K562 (cell line): ENCODE measurements at regions of chr10 and their contacts with region 1.

Region 1: GRCh38 chr10:30534465-30535144 is 94.9 kb downstream of the LYZL2 start:
- DNase-seq: peak; percentile 68 to 83 (median 70)
- ATAC-seq: peak; percentile 89
- H3K4me3 ChIP-seq: no peak overlapping the region
- H3K27ac ChIP-seq: no peak overlapping the region
- H3K4me1 ChIP-seq: peaks cover 4 to 8% of the 10 kb centered on the region in 2 experiments; a peak in 3 of 5 replicates
- H3K27me3 ChIP-seq: no peaks in the 10 kb centered on the region
- CTCF ChIP-seq: peak; percentile 84 to 95 (median 89)
- EP300 ChIP-seq: no peak
- POLR2A ChIP-seq: no peak
- RAD21 ChIP-seq: peak; percentile 84 to 93

Region 2: GRCh38 chr10:29430101-29430500 is 1104.5 kb before region 1 on chr10:
- CTCF ChIA-PET with region 1: no interaction called
- POLR2A ChIA-PET with region 1: no interaction called
- in situ Hi-C with region 1: no loop called
- intact Hi-C with region 1: no loop called
- DNase-seq: no peak
- ATAC-seq: no peak
- H3K4me3 ChIP-seq: no peak overlapping the region
- H3K27ac ChIP-seq: no peak overlapping the region
- H3K4me1 ChIP-seq: no peaks in the 10 kb centered on the region
- H3K27me3 ChIP-seq: no peaks in the 10 kb centered on the region
- CTCF ChIP-seq: no peak
- EP300 ChIP-seq: no peak
- POLR2A ChIP-seq: no peak
- RAD21 ChIP-seq: no peak

Region 3: DNA sequence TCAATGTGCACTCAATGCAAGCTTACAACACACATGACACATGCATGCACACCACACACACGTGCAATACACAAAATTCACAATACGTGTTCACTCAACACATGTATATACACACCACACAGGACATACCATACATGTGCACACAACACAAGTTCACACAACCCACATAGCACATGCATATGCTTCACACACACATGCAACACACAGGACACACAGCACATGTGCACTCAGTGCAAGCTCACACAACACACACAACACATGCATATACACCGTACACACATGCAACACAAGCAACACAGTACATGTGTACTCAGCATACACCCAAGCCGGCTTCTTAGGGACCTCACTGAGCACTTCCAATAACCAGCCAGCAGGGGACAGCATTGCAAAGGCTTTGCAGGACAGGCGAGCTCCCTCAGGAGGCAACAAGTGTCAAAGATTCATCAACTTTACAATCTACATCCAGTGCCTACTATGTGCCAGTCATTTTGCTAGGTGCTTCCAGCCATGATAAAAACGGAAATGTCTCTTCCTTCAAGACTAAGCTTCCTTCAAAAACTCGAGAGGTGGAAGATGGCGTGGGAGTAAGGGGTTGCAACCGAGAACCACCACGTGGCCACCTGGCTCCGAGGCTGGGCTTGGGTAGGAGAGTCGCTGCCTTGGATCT is 536.3 kb before region 1 on chr10:
- CTCF ChIA-PET with region 1: no interaction called
- POLR2A ChIA-PET with region 1: no interaction called
- in situ Hi-C with region 1: no loop called
- intact Hi-C with region 1: loop called (anchors 2 kb)
- DNase-seq: peak; percentile 69 to 83 (median 76)
- ATAC-seq: peak; percentile 93
- H3K4me3 ChIP-seq: no peak overlapping the region
- H3K27ac ChIP-seq: no peak overlapping the region
- H3K4me1 ChIP-seq: no peaks in the 10 kb centered on the region
- H3K27me3 ChIP-seq: peaks cover 0 to 16% of the 10 kb centered on the region in 2 experiments; a peak in 4 of 5 replicates
- CTCF ChIP-seq: peak; percentile 97 to 99 (median 99)
- EP300 ChIP-seq: no peak
- POLR2A ChIP-seq: no peak
- RAD21 ChIP-seq: peak; percentile 95 to 97

Region 4: DNA sequence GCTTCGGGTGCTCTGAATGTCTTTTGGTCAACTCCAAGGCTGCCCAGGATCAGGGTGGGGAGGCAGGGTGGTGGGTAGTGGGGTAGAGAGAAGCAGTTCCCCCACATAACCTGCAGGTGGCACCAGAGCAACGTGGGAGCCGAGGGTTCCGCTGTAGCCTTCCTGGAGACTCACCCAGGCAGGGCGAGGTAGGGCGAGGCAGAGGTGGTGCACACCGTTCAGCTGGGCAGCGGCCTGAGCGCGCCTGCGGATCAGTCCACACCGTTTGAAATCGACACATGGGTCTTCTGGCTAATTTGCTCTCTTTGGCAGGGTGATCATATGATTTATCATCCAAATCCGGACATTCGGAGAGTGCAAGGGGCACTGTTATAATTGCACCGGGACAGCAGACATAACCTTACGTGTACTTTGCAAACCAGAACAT is 142.0 kb before region 1 on chr10:
- CTCF ChIA-PET with region 1: interaction called, 15 read pairs
- POLR2A ChIA-PET with region 1: no interaction called
- in situ Hi-C with region 1: loop called (anchors 10 kb)
- intact Hi-C with region 1: loop called (anchors 1 kb)
- DNase-seq: peak; percentile 82 to 88 (median 88)
- ATAC-seq: peak; percentile 99
- H3K4me3 ChIP-seq: no peak overlapping the region
- H3K27ac ChIP-seq: no peak overlapping the region
- H3K4me1 ChIP-seq: peaks cover 12 to 16% of the 10 kb centered on the region in 2 experiments
- H3K27me3 ChIP-seq: no peaks in the 10 kb centered on the region
- CTCF ChIP-seq: peak; percentile 78 to 90 (median 88)
- EP300 ChIP-seq: no peak
- POLR2A ChIP-seq: no peak
- RAD21 ChIP-seq: peak; percentile 91 to 95

Region 5: DNA sequence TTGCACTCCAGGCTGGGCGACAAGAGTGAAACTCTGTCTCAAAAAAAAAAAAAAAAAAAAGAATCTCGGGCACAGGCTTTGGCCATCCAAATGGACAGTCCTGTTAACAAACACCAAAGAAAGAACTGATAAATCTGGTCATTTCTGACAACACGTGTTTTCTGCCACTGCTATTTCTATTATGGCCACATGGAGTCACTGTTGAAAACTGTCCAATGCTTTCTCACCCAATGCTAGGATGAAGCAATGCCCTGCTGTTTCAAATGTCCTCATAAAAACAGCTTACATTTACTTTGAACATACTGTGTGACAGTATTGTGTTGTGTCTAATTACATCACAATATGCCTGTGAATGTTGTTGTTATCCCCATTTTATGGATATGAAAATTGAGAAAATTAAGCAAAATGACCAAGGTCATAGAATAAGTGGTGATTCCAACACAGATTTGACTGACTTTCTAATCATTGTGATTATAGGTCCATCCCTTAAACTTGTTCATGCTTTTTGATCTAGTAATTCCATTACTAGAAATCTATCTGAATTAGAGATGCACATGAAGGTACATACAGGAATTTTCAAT is 120.5 kb before region 1 on chr10:
- CTCF ChIA-PET with region 1: interaction called, 17 read pairs
- POLR2A ChIA-PET with region 1: no interaction called
- in situ Hi-C with region 1: no loop called
- intact Hi-C with region 1: loop called (anchors 1 kb)
- DNase-seq: peak; percentile 62 to 73 (median 68)
- ATAC-seq: peak; percentile 74
- H3K4me3 ChIP-seq: no peak overlapping the region
- H3K27ac ChIP-seq: no peak overlapping the region
- H3K4me1 ChIP-seq: peaks cover 5 to 14% of the 10 kb centered on the region in 2 experiments; a peak in 4 of 5 replicates
- H3K27me3 ChIP-seq: no peaks in the 10 kb centered on the region
- CTCF ChIP-seq: peak; percentile 77 to 86 (median 82)
- EP300 ChIP-seq: no peak
- POLR2A ChIP-seq: no peak
- RAD21 ChIP-seq: peak; percentile 92 to 95

Region 6: DNA sequence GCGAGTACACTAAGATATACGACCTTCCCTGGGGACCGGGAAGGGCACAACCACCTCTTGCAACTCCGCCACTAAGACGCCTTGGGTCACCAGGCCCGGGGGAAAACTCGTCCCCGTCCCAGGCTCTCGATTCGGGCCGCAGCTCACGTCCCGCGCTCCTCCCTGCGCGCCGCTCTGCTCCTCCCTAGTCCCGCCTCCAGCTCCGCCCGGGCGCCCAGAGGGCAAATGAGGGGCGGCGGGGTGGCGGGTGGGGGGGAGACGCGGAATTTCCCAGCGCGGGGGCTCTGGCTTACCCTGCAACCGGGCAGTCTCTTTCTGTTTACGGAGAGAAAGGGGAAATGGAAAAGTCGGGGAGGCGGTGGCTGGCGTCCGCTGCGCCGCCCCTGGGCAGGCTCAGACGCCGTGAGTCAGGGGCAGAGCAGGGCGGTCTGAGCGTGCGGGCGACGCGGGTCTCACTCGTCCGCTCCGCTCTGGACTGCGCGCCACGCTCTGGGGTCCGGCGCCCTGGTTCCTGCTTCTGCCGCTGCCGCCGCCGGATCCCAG is 100.8 kb before region 1 on chr10 and contains the start of gene MAP3K8:
- CTCF ChIA-PET with region 1: no interaction called
- POLR2A ChIA-PET with region 1: interaction called, 3 read pairs
- in situ Hi-C with region 1: no loop called
- intact Hi-C with region 1: loop called (anchors 1 kb)
- DNase-seq: peak; percentile 68 to 87 (median 75)
- ATAC-seq: peak; percentile 76
- H3K4me3 ChIP-seq: peak within 1 kb of the TSS; percentile 75
- H3K27ac ChIP-seq: peak within 1 kb of the TSS; percentile 95
- H3K4me1 ChIP-seq: peaks cover 37 to 41% of the 10 kb centered on the region in 2 experiments
- H3K27me3 ChIP-seq: no peaks in the 10 kb centered on the region
- CTCF ChIP-seq: no peak
- EP300 ChIP-seq: no peak
- POLR2A ChIP-seq: no peak; the same call in none of the 2 replicates
- RAD21 ChIP-seq: no peak
- polyA plus RNA-seq, gene MAP3K8: 14.0 to 16.4 TPM

Region 7: GRCh38 chr10:30553625-30554439 is 19.2 kb after region 1 on chr10:
- CTCF ChIA-PET with region 1: no interaction called
- POLR2A ChIA-PET with region 1: interaction called, 14 read pairs
- in situ Hi-C with region 1: no loop called
- intact Hi-C with region 1: no loop called
- DNase-seq: peak; percentile 69 to 82 (median 70)
- ATAC-seq: peak; percentile 68
- H3K4me3 ChIP-seq: peak overlapping the region; percentile 10; the same call in 1 of the 2 replicates
- H3K27ac ChIP-seq: peak overlapping the region; percentile 97
- H3K4me1 ChIP-seq: peaks cover 20 to 37% of the 10 kb centered on the region in 2 experiments
- H3K27me3 ChIP-seq: no peaks in the 10 kb centered on the region
- CTCF ChIP-seq: no peak
- EP300 ChIP-seq: 0 out of 2 replicates have a peak, but pooled peaks have one; percentile 35
- POLR2A ChIP-seq: peak; percentile 36
- RAD21 ChIP-seq: no peak

Region 8: DNA sequence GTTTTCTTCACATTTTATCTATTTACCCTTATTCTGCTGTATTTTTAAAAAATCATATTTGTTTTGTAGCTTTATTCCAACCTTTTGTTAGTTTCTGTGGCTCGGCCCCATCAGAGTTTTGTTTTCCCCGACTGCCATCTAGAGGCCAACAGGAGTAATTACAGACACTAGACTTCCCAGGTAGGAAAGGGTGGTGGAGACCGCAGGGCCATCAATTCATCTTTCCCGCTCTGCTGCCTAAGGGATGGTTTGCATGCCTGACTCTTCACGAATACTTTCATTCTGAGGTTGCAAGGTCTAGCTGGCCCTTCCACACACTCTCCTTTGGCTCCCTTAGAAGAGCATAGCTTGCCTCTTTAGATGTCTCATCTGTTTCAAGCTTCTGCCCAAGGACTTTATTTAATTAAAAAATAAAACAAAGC is 56.7 kb after region 1 on chr10:
- CTCF ChIA-PET with region 1: interaction called, 3 read pairs
- POLR2A ChIA-PET with region 1: no interaction called
- in situ Hi-C with region 1: no loop called
- intact Hi-C with region 1: loop called (anchors 1 kb)
- DNase-seq: peak; percentile 59 to 77 (median 66)
- ATAC-seq: peak; percentile 83
- H3K4me3 ChIP-seq: no peak overlapping the region
- H3K27ac ChIP-seq: no peak overlapping the region
- H3K4me1 ChIP-seq: peaks cover 10% of the 10 kb centered on the region in 2 experiments; a peak in 3 of 5 replicates
- H3K27me3 ChIP-seq: 0 out of 5 replicates have a peak, but pooled peaks cover 0 to 4% of the 10 kb centered on the region in 2 experiments
- CTCF ChIP-seq: peak; percentile 69 to 85 (median 77)
- EP300 ChIP-seq: no peak
- POLR2A ChIP-seq: no peak
- RAD21 ChIP-seq: peak; percentile 88 to 89

Region 9: DNA sequence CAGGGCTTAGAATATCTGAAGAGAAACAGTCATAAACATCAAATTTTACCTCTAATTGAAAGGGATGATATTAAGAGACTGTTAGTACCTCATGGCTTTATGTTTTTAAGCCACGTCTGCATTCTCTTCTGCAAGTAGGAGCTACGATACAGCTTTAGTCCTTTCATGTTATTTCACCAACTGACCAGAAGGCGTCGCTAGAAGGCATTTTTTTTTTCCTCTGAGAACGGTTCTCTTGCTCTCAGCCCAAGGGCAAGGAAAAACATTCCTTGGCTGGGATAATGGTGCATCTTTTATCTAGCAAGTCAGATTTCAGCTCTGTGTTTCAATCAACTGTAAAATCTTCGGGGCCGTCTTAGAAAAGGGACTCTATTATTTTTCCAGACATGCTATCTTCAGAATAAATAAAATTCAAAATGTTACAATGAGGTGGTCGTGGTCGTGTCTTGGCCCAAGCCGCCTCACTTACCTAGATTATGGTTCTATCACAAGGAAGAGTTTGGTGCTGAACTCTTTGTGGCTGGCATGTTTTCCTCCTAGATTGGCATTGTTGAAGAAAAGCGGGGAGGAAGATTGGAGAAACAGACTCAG is 136.5 kb after region 1 on chr10:
- CTCF ChIA-PET with region 1: no interaction called
- POLR2A ChIA-PET with region 1: no interaction called
- in situ Hi-C with region 1: no loop called
- intact Hi-C with region 1: no loop called
- DNase-seq: peak; percentile 20 to 79 (median 46)
- ATAC-seq: peak; percentile 84
- H3K4me3 ChIP-seq: no peak overlapping the region
- H3K27ac ChIP-seq: no peak overlapping the region
- H3K4me1 ChIP-seq: no peaks in the 10 kb centered on the region; a peak in 1 of 5 replicates
- H3K27me3 ChIP-seq: peaks cover 15 to 34% of the 10 kb centered on the region in 2 experiments; a peak in 4 of 5 replicates
- CTCF ChIP-seq: peak; percentile 64 to 74 (median 69)
- EP300 ChIP-seq: no peak
- POLR2A ChIP-seq: no peak
- RAD21 ChIP-seq: peak; percentile 46 to 71; a peak in 3 of 4 replicates